A673 (cell line): ENCODE measurements at regions of chr2 and their contacts with region 1.

Region 1: DNA sequence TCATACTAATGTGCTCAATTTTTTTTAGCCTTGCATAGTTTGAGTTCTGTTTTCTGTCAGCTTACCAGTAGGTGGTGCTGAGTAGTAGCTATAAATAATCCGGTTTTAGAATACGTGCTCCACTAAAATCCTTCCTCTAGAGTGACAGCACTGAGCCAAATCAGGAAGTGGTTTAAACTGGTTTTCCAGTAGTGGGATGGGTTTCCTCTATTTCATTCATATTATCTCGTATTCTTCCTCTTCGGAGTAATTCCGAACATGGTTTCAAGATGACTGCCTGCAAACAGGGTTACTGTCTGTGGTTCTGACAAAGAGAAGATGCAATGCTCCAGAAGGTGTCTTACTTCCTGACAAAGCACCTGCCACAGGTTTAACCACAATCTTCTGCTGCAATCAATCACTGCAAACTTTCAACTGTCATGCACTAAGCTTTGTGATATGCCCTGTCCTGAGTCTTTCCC is 496.9 kb upstream of the VRK2 start:
- DNase-seq: peak; percentile 64
- H3K4me3 ChIP-seq: no peak overlapping the region
- H3K27ac ChIP-seq: no peak overlapping the region
- H3K4me1 ChIP-seq: no peaks in the 10 kb centered on the region
- H3K27me3 ChIP-seq: no peaks in the 10 kb centered on the region
- CTCF ChIP-seq: peak; percentile 69

Region 2: DNA sequence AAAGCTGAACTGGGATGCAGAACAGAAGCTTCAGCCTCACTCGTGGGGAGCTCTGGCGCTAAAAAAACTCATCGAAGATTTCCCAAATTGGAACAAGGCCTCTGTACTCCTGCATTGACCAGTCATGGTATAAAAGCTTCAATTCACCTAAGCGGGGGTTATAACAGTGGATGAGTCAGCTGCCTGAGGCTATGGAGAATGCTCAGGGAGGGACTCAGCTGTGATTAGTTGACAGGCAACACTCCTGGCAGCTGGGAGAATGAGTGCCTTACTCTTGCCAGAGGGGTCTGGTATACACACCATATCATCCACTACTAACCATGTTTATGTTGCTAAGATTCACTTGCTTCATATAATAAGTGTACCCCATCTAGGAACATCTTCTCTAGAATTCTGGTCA is 146.3 kb after region 1 on chr2:
- CTCF ChIA-PET with region 1: interaction called, 7 read pairs
- POLR2A ChIA-PET with region 1: no interaction called
- intact Hi-C with region 1: loop called (anchors 5 kb)
- DNase-seq: peak; percentile 34
- H3K4me3 ChIP-seq: no peak overlapping the region
- H3K27ac ChIP-seq: no peak overlapping the region
- H3K4me1 ChIP-seq: peaks cover 9% of the 10 kb centered on the region
- H3K27me3 ChIP-seq: no peaks in the 10 kb centered on the region
- CTCF ChIP-seq: no peak